Mammary epithelial cell (primary cell): ENCODE measurements at regions of chr2 and their contacts with region 1.

Region 1: DNA sequence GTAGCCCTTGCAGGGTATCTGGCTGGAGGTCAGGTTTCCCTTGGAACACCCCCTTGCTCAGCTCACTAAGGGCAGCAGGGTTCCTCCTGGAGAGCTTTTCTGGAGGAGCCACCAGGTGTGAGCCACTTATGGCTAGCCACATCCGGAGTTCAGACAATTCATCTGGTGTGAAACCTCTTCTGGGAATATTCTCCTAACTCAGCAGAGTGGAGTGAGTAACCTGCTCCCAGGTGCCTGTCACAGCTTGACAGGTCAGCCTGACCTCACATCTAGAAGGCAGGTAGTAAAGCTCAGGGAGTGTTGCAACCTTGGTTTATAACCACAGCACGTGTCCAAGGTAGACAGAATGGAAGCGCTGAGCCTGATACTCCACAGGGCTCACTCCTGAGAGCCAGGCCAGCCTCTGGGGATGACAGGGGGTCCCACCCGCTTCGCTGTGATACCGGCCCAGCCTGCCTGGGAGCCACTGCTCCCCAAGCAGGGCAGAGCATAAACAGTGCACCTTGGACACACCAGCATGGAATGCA is 62.6 kb upstream of the TGFA start:
- DNase-seq: peak; percentile 99
- H3K4me3 ChIP-seq: no peak overlapping the region
- H3K27ac ChIP-seq: peak overlapping the region; percentile 46
- H3K4me1 ChIP-seq: peaks cover 25% of the 10 kb centered on the region
- H3K27me3 ChIP-seq: no peaks in the 10 kb centered on the region
- CTCF ChIP-seq: no peak

Region 2: GRCh38 chr2:70340921-70341765 is 275.1 kb before region 1 on chr2:
- CTCF ChIA-PET with region 1: interaction called, 7 read pairs
- dilution Hi-C with region 1: no loop called
- in situ Hi-C with region 1: loop called in 1 of 2 experiments (anchors 5 kb)
- intact Hi-C with region 1: loop called (anchors 1 kb)
- DNase-seq: peak; percentile 57
- H3K4me3 ChIP-seq: no peak overlapping the region
- H3K27ac ChIP-seq: peak overlapping the region; percentile 2
- H3K4me1 ChIP-seq: peaks cover 33% of the 10 kb centered on the region
- H3K27me3 ChIP-seq: no peaks in the 10 kb centered on the region
- CTCF ChIP-seq: peak; percentile 87 to 89

Region 3: GRCh38 chr2:70484086-70484485 is 132.1 kb before region 1 on chr2:
- CTCF ChIA-PET with region 1: no interaction called
- dilution Hi-C with region 1: no loop called
- in situ Hi-C with region 1: no loop called
- intact Hi-C with region 1: loop called (anchors 1 kb)
- DNase-seq: no peak
- H3K4me3 ChIP-seq: no peak overlapping the region
- H3K27ac ChIP-seq: no peak overlapping the region
- H3K4me1 ChIP-seq: peaks cover 26% of the 10 kb centered on the region
- H3K27me3 ChIP-seq: no peaks in the 10 kb centered on the region
- CTCF ChIP-seq: no peak

Region 4: DNA sequence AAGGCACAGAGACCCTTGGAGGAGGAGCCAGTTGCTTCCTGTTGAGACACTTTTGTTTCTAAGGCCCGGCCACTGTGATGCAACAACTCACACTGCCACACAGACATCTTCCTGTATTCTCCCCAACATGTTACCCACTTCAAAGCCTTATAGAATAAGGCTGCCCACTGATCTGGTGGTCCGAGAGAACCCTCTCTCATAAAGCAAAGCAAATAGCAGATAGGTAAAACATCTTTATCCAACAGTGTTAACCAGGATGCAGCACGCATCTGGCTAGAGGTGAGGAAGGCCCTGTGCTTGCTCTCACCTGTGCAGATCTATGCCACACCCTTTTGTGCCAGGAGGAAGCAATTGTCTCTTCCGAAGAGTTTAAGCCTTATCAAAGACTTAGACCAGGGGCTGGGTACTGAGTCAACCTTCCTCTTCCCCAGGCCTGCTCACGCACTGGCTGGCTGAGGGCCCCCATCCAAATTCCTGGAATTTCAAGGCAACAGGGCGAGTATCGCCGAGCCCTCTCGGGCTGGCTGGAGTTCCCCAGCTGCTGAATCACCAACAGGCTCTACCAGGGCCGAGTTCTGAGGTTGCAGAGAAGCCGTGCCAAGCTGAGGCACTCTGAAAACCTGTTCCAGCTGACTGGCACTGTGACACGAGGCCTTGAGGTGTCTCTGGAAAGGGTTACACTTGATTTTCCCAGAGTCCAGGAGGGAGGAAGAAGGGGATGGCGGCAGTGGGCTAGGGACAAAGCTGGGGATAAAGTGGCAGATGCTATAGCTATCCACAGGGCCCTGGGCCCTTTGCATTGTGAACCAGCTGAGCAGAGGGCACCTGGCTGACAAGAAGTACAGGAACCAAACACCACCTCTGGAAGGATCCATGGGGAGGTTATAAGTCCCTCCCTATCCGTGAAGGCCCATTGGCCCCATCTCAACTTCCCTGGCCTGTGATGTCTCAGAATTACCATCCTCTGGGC is 92.0 kb before region 1 on chr2:
- CTCF ChIA-PET with region 1: no interaction called
- dilution Hi-C with region 1: no loop called
- in situ Hi-C with region 1: no loop called
- intact Hi-C with region 1: loop called (anchors 1 kb)
- DNase-seq: peak; percentile 99
- H3K4me3 ChIP-seq: peak overlapping the region in 1 of 3 experiments; percentile 5
- H3K27ac ChIP-seq: peak overlapping the region; percentile 97
- H3K4me1 ChIP-seq: peaks cover 62% of the 10 kb centered on the region
- H3K27me3 ChIP-seq: no peaks in the 10 kb centered on the region
- CTCF ChIP-seq: no peak

Region 5: DNA sequence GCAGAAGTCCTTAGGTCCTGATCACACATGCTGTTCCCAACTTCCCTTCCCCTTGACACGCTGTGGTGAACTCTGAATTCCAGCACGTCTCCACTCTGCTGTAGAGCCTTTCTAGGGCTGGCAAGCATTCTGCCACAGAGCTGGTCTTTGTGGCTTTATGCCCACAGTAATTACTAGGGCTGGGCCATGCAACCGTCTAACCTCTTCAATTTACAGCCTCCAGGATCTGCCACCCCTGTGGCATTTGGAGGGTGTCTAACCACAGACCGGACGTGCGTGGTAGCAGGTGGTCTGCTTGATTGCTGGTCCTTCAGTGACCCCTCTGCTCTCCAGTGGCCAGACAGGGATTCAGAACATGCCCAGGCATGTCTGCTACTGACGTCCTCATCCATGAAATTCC is 19.5 kb before region 1 on chr2:
- CTCF ChIA-PET with region 1: no interaction called
- dilution Hi-C with region 1: no loop called
- in situ Hi-C with region 1: no loop called
- intact Hi-C with region 1: loop called (anchors 1 kb)
- DNase-seq: peak; percentile 85
- H3K4me3 ChIP-seq: no peak overlapping the region
- H3K27ac ChIP-seq: peak overlapping the region; percentile 92
- H3K4me1 ChIP-seq: peaks cover 24% of the 10 kb centered on the region
- H3K27me3 ChIP-seq: no peaks in the 10 kb centered on the region
- CTCF ChIP-seq: no peak

Region 6: GRCh38 chr2:70851704-70852103 is 235.5 kb after region 1 on chr2:
- CTCF ChIA-PET with region 1: no interaction called
- dilution Hi-C with region 1: no loop called
- in situ Hi-C with region 1: no loop called
- intact Hi-C with region 1: no loop called
- DNase-seq: peak; percentile 4
- H3K4me3 ChIP-seq: no peak overlapping the region
- H3K27ac ChIP-seq: no peak overlapping the region
- H3K4me1 ChIP-seq: no peaks in the 10 kb centered on the region
- H3K27me3 ChIP-seq: no peaks in the 10 kb centered on the region
- CTCF ChIP-seq: no peak